ENCODE measurements at regions of chr13 and their contacts with region 1.

Region 1: DNA sequence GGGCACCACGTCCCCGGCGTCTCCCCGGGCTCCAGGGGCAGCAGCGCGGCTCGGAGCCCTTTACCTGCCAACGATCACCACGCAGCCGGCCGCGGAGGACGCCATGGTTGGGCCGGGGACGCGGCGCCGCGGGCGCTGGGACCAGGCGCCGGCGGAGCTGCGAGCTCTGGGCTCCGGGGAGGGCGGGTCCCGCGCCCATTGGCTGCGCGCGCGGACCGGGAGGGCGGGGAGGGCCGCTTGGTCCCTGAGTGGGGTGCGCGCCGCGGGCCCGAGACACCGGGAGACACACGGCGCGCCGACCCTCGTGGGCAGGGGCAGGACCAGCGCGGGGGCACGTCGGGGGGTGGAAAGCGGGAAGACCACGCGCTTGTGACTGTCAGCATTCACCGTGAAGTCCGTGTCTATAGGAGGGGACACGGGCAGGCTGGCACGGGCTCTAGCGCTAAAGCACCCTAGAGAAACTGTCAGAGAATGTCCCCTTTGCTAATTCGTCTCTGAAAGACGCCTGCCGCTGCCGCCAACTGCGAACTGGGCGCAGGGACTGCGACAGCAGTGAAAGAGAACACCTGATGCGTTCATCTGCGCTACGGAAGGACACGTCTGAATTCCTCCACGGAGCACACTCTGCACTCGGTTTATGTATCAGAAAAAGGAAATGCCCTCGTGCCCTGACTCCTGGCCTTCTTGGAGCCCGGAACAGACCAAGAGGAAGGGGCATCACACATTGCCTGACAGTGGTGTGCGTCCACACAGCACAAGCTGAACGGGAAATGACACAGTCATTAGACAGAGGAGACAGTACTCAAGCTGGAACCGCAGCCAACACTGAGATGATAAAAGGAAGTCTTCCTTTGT is at the start of gene CRYL1:
- DNase-seq: peak; percentile 73
- ATAC-seq: peak; percentile 99
- H3K4me3 ChIP-seq: peak within 1 kb of the TSS; percentile 87
- H3K27ac ChIP-seq: peak within 1 kb of the TSS; percentile 59; the same call in 1 of the 2 replicates
- H3K4me1 ChIP-seq: 0 out of 2 replicates have a peak, but pooled peaks cover 2% of the 10 kb centered on the region
- H3K27me3 ChIP-seq: no peaks in the 10 kb centered on the region
- CTCF ChIP-seq: no peak
- POLR2A ChIP-seq: peak; percentile 60; the same call in 1 of the 2 replicates
- RAD21 ChIP-seq: no peak
- total RNA-seq, gene CRYL1: 10.6 and 11.7 TPM in 2 replicates

Region 2: GRCh38 chr13:20566898-20567874 is 41.3 kb after region 1 on chr13 and contains the start of gene IFT88:
- CTCF ChIA-PET with region 1: no interaction called
- POLR2A ChIA-PET with region 1: no interaction called
- dilution Hi-C with region 1: no loop called
- in situ Hi-C with region 1: no loop called
- intact Hi-C with region 1: loop called (anchors 1 kb)
- DNase-seq: peak; percentile 85
- ATAC-seq: peak; percentile 94
- H3K4me3 ChIP-seq: peak within 1 kb of the TSS; percentile 96
- H3K27ac ChIP-seq: peak within 1 kb of the TSS; percentile 98
- H3K4me1 ChIP-seq: no peaks in the 10 kb centered on the region
- H3K27me3 ChIP-seq: no peaks in the 10 kb centered on the region
- CTCF ChIP-seq: no peak
- POLR2A ChIP-seq: peak; percentile 84
- RAD21 ChIP-seq: no peak; the same call in 1 of the 2 replicates
- total RNA-seq, gene IFT88: 8.6 and 13.3 TPM in 2 replicates

Region 3: GRCh38 chr13:20686863-20687579 is 161.1 kb after region 1 on chr13:
- CTCF ChIA-PET with region 1: no interaction called
- POLR2A ChIA-PET with region 1: no interaction called
- dilution Hi-C with region 1: no loop called
- in situ Hi-C with region 1: no loop called
- intact Hi-C with region 1: loop called (anchors 5 kb)
- DNase-seq: no peak
- ATAC-seq: no peak
- H3K4me3 ChIP-seq: no peak overlapping the region
- H3K27ac ChIP-seq: no peak overlapping the region
- H3K4me1 ChIP-seq: peaks cover 2% of the 10 kb centered on the region; the same call in 1 of the 2 replicates
- H3K27me3 ChIP-seq: no peaks in the 10 kb centered on the region
- CTCF ChIP-seq: no peak
- POLR2A ChIP-seq: no peak
- RAD21 ChIP-seq: no peak

Region 4: GRCh38 chr13:20902438-20903163 is 376.7 kb after region 1 on chr13 and contains the start of gene XPO4:
- CTCF ChIA-PET with region 1: no interaction called
- POLR2A ChIA-PET with region 1: no interaction called
- dilution Hi-C with region 1: no loop called
- in situ Hi-C with region 1: no loop called
- intact Hi-C with region 1: no loop called
- DNase-seq: peak; percentile 69
- ATAC-seq: peak; percentile 98
- H3K4me3 ChIP-seq: peak within 1 kb of the TSS; percentile 90
- H3K27ac ChIP-seq: peak within 1 kb of the TSS; percentile 86
- H3K4me1 ChIP-seq: no peaks in the 10 kb centered on the region
- H3K27me3 ChIP-seq: no peaks in the 10 kb centered on the region
- CTCF ChIP-seq: no peak
- POLR2A ChIP-seq: peak; percentile 81
- RAD21 ChIP-seq: no peak
- total RNA-seq, gene XPO4: 21.1 and 25.3 TPM in 2 replicates

Region 5: DNA sequence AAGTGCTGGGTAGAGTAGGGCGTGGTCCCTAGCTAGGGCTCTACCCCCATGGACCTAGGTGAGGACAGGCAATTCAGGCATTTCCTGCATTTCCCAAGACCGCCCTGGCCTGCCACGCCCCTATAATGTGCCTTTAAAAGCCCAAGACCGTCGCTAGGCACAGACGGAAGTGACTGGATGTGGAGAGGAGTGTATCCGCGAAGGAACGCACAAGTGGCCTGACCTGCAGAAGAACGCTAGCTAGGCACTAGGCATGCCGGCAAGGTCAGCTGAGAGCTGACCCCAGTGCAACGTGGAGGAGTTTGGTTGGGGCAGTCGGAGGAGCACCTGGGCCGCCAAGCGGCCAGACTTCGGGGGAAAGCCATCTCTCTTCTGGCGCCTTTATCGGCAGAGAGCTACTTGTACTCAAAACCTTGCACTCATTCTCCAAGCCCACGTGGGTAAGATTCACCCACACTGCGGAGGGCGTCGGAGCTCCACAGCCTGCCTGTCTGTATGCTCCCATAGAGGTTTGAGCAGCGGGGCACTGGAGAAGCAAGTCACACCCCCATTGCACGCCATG is 1515.0 kb after region 1 on chr13:
- CTCF ChIA-PET with region 1: no interaction called
- POLR2A ChIA-PET with region 1: no interaction called
- dilution Hi-C with region 1: no loop called
- in situ Hi-C with region 1: no loop called
- intact Hi-C with region 1: no loop called
- DNase-seq: no peak
- ATAC-seq: no peak
- H3K4me3 ChIP-seq: no peak overlapping the region
- H3K27ac ChIP-seq: no peak overlapping the region
- H3K4me1 ChIP-seq: no peaks in the 10 kb centered on the region
- H3K27me3 ChIP-seq: peaks cover 2% of the 10 kb centered on the region; the same call in 1 of the 2 replicates
- CTCF ChIP-seq: no peak
- POLR2A ChIP-seq: no peak
- RAD21 ChIP-seq: no peak